Calu3 (cell line): ENCODE measurements at regions of chr2 and their contacts with region 1.

Region 1: DNA sequence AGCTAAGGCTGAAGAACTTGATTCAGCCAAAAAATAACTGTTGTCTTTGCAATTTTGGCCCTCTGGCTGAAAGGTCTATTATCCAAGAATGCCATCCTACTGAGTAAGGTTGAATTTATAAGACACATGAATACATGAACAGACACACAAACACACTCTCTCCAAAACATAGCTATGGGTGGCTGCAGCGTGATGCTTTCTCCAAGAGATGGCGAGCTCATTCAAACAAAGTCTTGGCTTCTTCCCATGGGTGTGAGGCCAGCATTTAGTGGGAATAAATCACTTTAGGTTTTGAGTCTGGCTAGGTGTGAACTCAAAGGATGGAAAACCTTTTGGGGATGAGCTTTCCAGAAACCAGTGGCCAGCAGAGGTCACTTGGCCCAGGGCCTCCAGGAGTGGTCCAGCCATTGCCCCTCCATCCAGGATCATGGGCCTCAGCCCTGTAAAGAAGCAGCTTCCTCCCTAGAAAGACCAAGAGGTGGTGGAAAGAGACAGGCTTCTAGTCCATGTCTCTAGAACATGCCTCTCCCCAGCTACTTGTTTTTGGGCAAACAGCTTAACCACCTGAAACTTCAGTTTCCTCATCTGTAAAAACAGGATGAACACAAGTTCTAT is 11.0 kb upstream of the OSR1 start:
- DNase-seq: peak; percentile 38
- H3K4me3 Mint-ChIP-seq: no peak overlapping the region
- H3K27ac Mint-ChIP-seq: no peak overlapping the region
- H3K4me1 Mint-ChIP-seq: no peaks in the 10 kb centered on the region
- H3K27me3 Mint-ChIP-seq: peaks cover 36% of the 10 kb centered on the region
- CTCF ChIP-seq: peak; percentile 17

Region 2: DNA sequence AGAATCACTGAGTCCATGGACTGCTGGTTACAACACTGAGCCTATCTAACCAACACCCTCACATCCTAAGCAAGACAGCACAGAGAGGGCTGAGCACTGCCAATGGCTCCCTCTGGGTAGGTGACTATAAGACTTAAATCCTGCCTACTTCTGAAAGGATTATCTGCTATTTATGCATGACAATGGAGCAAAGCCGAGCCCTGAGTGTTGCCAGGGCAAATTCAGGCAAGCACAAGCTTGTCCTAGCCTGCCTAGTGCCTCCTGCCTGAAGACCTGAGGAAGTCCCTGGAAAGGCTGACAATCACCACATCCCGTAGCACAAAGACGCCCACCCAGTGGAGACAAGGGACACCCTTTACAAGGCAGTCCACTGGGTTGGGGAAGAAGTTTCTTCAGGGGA is 140.7 kb before region 1 on chr2:
- CTCF ChIA-PET with region 1: no interaction called
- intact Hi-C with region 1: no loop called
- DNase-seq: no peak
- H3K4me3 Mint-ChIP-seq: no peak overlapping the region
- H3K27ac Mint-ChIP-seq: no peak overlapping the region
- H3K4me1 Mint-ChIP-seq: no peaks in the 10 kb centered on the region
- H3K27me3 Mint-ChIP-seq: no peaks in the 10 kb centered on the region
- CTCF ChIP-seq: no peak

Region 3: GRCh38 chr2:19251554-19251953 is 117.9 kb before region 1 on chr2:
- CTCF ChIA-PET with region 1: no interaction called
- intact Hi-C with region 1: no loop called
- DNase-seq: no peak
- H3K4me3 Mint-ChIP-seq: no peak overlapping the region
- H3K27ac Mint-ChIP-seq: no peak overlapping the region
- H3K4me1 Mint-ChIP-seq: peaks cover 16% of the 10 kb centered on the region
- H3K27me3 Mint-ChIP-seq: no peaks in the 10 kb centered on the region
- CTCF ChIP-seq: no peak

Region 4: GRCh38 chr2:19667085-19667484 is 297.6 kb after region 1 on chr2:
- CTCF ChIA-PET with region 1: interaction called, 8 read pairs
- intact Hi-C with region 1: loop called (anchors 1 kb)
- DNase-seq: no peak
- H3K4me3 Mint-ChIP-seq: no peak overlapping the region
- H3K27ac Mint-ChIP-seq: no peak overlapping the region
- H3K4me1 Mint-ChIP-seq: peaks cover 25% of the 10 kb centered on the region
- H3K27me3 Mint-ChIP-seq: no peaks in the 10 kb centered on the region
- CTCF ChIP-seq: no peak

Region 5: GRCh38 chr2:19746611-19747309 is 377.3 kb after region 1 on chr2:
- CTCF ChIA-PET with region 1: interaction called, 11 read pairs
- intact Hi-C with region 1: loop called (anchors 5 kb)
- DNase-seq: peak; percentile 63
- H3K4me3 Mint-ChIP-seq: no peak overlapping the region
- H3K27ac Mint-ChIP-seq: no peak overlapping the region
- H3K4me1 Mint-ChIP-seq: no peaks in the 10 kb centered on the region
- H3K27me3 Mint-ChIP-seq: peaks cover 16% of the 10 kb centered on the region
- CTCF ChIP-seq: peak; percentile 21

Region 6: GRCh38 chr2:20125616-20126015 is 756.2 kb after region 1 on chr2:
- CTCF ChIA-PET with region 1: no interaction called
- intact Hi-C with region 1: no loop called
- DNase-seq: no peak
- H3K4me3 Mint-ChIP-seq: no peak overlapping the region
- H3K27ac Mint-ChIP-seq: no peak overlapping the region
- H3K4me1 Mint-ChIP-seq: peaks cover 46% of the 10 kb centered on the region
- H3K27me3 Mint-ChIP-seq: no peaks in the 10 kb centered on the region
- CTCF ChIP-seq: no peak